Left colon (tissue), 2 donors: ENCODE measurements at regions of chr2 and their contacts with region 1.

Region 1: DNA sequence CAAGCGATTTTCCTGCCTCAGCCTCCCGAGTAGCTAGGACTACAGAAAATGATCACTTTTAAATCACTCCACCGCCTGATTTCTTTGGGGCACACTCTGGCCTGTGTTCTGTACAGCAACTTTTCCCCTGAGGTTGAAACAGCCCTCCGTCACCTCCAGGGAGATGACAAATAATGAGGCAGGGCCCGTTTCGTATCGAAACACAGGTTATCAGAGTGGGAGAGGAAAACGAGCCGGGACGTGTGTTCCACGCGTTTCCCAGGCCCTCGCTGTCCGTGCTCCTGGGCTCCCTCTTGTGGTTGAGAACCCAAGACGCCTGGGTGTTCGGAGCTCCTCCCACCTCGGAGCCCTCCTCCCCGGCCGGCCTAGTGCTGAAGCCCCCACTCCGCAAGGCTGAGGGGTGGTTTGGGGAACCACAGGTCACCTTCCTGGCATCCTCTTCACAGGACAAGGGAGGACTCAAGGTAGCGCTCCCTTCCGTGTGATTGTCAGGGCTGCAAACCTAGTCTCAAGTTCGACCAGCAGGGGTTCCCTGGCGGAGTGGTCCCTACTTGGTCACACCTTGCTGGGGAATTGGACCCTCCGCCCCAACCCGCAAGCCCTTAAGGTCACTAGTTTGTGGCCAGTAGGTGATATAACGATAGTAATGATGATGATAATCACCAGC is 12.8 kb downstream of the ATP6V1B1 start:
- DNase-seq: peak; percentile 60 to 83
- ATAC-seq: peak; percentile 88

Region 2: GRCh38 chr2:70789304-70790135 is 158.9 kb before region 1 on chr2:
- intact Hi-C with region 1: loop called in 1 of 2 experiments (anchors 10 kb)
- DNase-seq: peak in 1 of 2 donors; percentile 58
- ATAC-seq: peak; percentile 43